Activated T-helper 2 cell treated with anti-CD3 and anti-CD28 coated beads, Interferon-gamma antibody, Interleukin-2, Interleukin-4, amounts not matched to agents 10 μg/mL and 5 μg/mL and 100 μg/mL, durations not matched to agents 14 hours and 24 hours and 36 hours (primary cell): ENCODE measurements at regions of chr22 and their contacts with region 1.

Region 1: GRCh38 chr22:49975543-49976389 is 15.2 kb downstream of the PIM3 start:
- DNase-seq: no peak
- H3K4me3 Mint-ChIP-seq: peak overlapping the region; percentile 51
- H3K27ac Mint-ChIP-seq: peak overlapping the region; percentile 92
- H3K4me1 Mint-ChIP-seq: peaks cover 24% of the 10 kb centered on the region
- H3K27me3 Mint-ChIP-seq: no peaks in the 10 kb centered on the region

Region 2: GRCh38 chr22:49992921-49993648 is 17.3 kb after region 1 on chr22:
- intact Hi-C with region 1: loop called (anchors 2 kb)
- DNase-seq: peak; percentile 49
- H3K4me3 Mint-ChIP-seq: no peak overlapping the region
- H3K27ac Mint-ChIP-seq: no peak overlapping the region
- H3K4me1 Mint-ChIP-seq: peaks cover 3% of the 10 kb centered on the region
- H3K27me3 Mint-ChIP-seq: peaks cover 7% of the 10 kb centered on the region